ENCODE measurements at regions of chr9 and their contacts with region 1.

Region 1: GRCh38 chr9:125143375-125144090 is at the start of gene SCAI:
- DNase-seq: peak; percentile 99
- H3K4me3 ChIP-seq: peak within 1 kb of the TSS; percentile 19 to 74 (median 59)
- H3K27ac ChIP-seq: no peak within 1 kb of the TSS
- H3K4me1 ChIP-seq: peaks cover 6% of the 10 kb centered on the region
- H3K27me3 ChIP-seq: no peaks in the 10 kb centered on the region
- CTCF ChIP-seq: peak; percentile 94 to 99
- POLR2A ChIP-seq: peak; percentile 71
- total RNA-seq, gene SCAI: 6.9 and 9.3 TPM in 2 replicates

Region 2: GRCh38 chr9:124868511-124869465 is 274.7 kb before region 1 on chr9:
- CTCF ChIA-PET with region 1: no interaction called
- POLR2A ChIA-PET with region 1: no interaction called
- dilution Hi-C with region 1: no loop called
- intact Hi-C with region 1: loop called (anchors 1 kb)
- DNase-seq: peak; percentile 82
- H3K4me3 ChIP-seq: peak overlapping the region; percentile 31 to 97 (median 79)
- H3K27ac ChIP-seq: peak overlapping the region; percentile 75
- H3K4me1 ChIP-seq: peaks cover 35% of the 10 kb centered on the region
- H3K27me3 ChIP-seq: no peaks in the 10 kb centered on the region
- CTCF ChIP-seq: no peak
- POLR2A ChIP-seq: peak; percentile 92

Region 3: DNA sequence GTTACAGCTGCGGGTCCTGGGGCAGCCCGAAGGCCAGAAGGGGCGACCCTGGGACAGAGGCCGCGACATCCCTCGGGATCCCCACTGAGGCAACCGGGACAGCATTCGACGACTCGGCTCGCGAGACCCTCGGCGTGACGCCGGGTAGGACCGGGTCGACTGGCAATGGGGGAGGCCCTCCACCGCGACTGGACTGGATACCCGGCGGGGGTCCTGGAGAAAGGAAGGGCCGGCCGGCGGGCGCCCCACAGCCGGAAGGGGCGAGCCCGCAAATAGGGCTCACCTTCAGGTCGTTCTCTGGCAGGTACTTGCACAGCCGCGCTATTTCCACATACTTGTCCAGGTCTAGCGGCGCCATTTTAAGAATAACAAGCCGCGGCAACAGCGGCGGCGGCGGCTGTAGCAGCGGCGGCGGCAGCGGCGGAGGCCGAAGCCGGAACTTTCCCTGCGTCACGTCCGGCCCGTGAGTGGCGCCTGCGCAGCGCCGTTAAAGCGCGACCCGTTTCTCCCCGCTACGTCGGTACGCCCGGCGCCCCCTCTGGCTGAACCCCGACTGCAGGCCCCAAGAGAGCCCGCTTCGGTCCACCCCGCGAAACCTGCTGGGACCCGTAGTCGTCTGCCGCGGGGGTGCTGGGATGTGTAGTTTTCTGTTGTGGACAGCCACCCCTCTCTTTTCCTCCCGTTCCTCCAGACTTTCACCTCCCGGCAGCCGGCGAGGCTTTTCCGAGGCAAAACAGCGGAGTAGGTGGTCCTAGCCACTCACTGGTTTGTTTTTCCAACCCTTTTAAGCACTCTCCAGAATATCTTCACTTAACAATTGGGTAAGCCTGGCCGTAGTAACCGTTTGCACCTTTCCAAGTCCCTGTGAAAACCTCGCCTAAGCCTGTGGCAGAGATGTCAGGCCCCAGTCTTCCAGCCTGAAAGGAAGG is 46.1 kb after region 1 on chr9 and contains the start of gene PPP6C:
- CTCF ChIA-PET with region 1: interaction called, 4 read pairs
- POLR2A ChIA-PET with region 1: no interaction called
- dilution Hi-C with region 1: no loop called
- intact Hi-C with region 1: loop called (anchors 1 kb)
- DNase-seq: peak; percentile 98
- H3K4me3 ChIP-seq: peak within 1 kb of the TSS; percentile 70 to 90 (median 78)
- H3K27ac ChIP-seq: peak within 1 kb of the TSS; percentile 66
- H3K4me1 ChIP-seq: peaks cover 7% of the 10 kb centered on the region
- H3K27me3 ChIP-seq: no peaks in the 10 kb centered on the region
- CTCF ChIP-seq: peak; percentile 76 to 88
- POLR2A ChIP-seq: peak; percentile 91
- total RNA-seq, gene PPP6C: 42.1 and 42.6 TPM in 2 replicates

Region 4: DNA sequence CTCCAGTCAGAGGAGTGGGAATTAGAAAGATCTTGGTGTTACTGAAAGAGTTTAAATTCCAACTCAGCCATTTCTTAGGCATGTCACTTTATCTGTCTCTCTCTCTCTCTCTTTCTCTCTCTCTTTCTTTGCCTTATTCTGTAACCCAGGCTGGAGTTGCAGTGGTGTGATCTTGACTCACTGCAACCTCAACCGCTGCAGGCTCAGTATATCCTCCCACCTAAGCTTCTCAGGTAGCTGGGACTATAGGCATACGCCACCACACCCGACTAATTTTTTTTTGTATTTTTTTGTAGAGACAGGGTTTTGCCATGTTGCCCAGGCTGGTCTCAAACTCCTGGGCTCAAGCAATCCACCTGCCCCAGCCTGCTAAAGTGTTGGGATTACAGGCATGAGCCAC is 75.1 kb after region 1 on chr9:
- CTCF ChIA-PET with region 1: no interaction called
- POLR2A ChIA-PET with region 1: no interaction called
- dilution Hi-C with region 1: no loop called
- intact Hi-C with region 1: no loop called
- DNase-seq: no peak
- H3K4me3 ChIP-seq: no peak overlapping the region
- H3K27ac ChIP-seq: no peak overlapping the region
- H3K4me1 ChIP-seq: no peaks in the 10 kb centered on the region
- H3K27me3 ChIP-seq: no peaks in the 10 kb centered on the region
- CTCF ChIP-seq: no peak
- POLR2A ChIP-seq: no peak

Measured in endothelial cell of umbilical vein (primary cell).